ENCODE measurements at regions of chr6 and their contacts with region 1.

Region 1: GRCh38 chr6:158869826-158870648 is 50.9 kb upstream of the EZR start:
- DNase-seq: peak in 1 of 9 donors; percentile 97
- ATAC-seq: peak; percentile 87
- H3K4me3 ChIP-seq: peak overlapping the region; percentile 71
- H3K4me3 Mint-ChIP-seq: peak overlapping the region; percentile 83 to 96 (median 92)
- H3K27ac ChIP-seq: peak overlapping the region; percentile 98
- H3K27ac Mint-ChIP-seq: peak overlapping the region; percentile 98 to 100 (median 100)
- H3K4me1 ChIP-seq: peaks cover 16 to 18% of the 10 kb centered on the region in 2 donors
- H3K4me1 Mint-ChIP-seq: peaks cover 7 to 45% (median 25%) of the 10 kb centered on the region in 7 donors
- H3K27me3 ChIP-seq: no peaks in the 10 kb centered on the region
- H3K27me3 Mint-ChIP-seq: peaks cover 0 to 5% (median 0%) of the 10 kb centered on the region in 5 donors

Region 2: GRCh38 chr6:158686791-158687381 is 183.2 kb before region 1 on chr6:
- CTCF ChIA-PET with region 1: no interaction called
- POLR2A ChIA-PET with region 1: no interaction called
- intact Hi-C with region 1: loop called in 1 of 2 experiments (anchors 1 kb)
- DNase-seq: peak; percentile 29 to 92 (median 87)
- ATAC-seq: peak; percentile 96
- H3K4me3 ChIP-seq: peak overlapping the region; percentile 31
- H3K4me3 Mint-ChIP-seq: peak overlapping the region; percentile 66 to 91 (median 79)
- H3K27ac ChIP-seq: peak overlapping the region; percentile 82
- H3K27ac Mint-ChIP-seq: peak overlapping the region; percentile 88 to 100 (median 98)
- H3K4me1 ChIP-seq: peaks cover 28 to 49% of the 10 kb centered on the region in 2 donors
- H3K4me1 Mint-ChIP-seq: peaks cover 36 to 76% (median 70%) of the 10 kb centered on the region in 7 donors
- H3K27me3 ChIP-seq: no peaks in the 10 kb centered on the region
- H3K27me3 Mint-ChIP-seq: no peaks in the 10 kb centered on the region

Region 3: DNA sequence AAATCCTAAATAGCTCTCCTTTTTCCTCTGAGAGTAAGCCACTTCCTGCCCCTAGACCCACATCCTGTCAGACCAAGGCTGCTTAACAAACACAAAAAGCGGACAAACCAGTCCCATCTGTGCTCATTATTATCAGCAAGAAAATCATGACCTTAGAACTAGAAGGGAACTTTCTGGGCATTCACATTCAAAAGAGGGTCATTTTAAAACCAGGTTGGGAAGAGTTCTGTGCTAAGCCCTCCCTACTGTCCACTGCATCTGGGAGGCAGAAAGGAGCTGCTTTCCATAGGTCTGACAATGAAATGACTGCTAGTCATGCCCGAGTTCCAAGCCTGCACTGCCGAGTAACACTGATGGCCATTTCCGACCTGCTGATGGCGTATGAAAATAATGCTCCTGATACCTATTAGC is 66.3 kb before region 1 on chr6:
- CTCF ChIA-PET with region 1: no interaction called
- POLR2A ChIA-PET with region 1: interaction called, 24 read pairs
- intact Hi-C with region 1: no loop called
- DNase-seq: peak in 7 of 9 donors; percentile 40 to 67 (median 60)
- ATAC-seq: peak; percentile 55
- H3K4me3 ChIP-seq: peak overlapping the region; percentile 37
- H3K4me3 Mint-ChIP-seq: peak overlapping the region; percentile 72 to 94 (median 81)
- H3K27ac ChIP-seq: peak overlapping the region; percentile 77
- H3K27ac Mint-ChIP-seq: peak overlapping the region; percentile 72 to 94 (median 82)
- H3K4me1 ChIP-seq: peaks cover 76 to 92% of the 10 kb centered on the region in 2 donors
- H3K4me1 Mint-ChIP-seq: peaks cover 57 to 98% (median 92%) of the 10 kb centered on the region in 7 donors
- H3K27me3 ChIP-seq: no peaks in the 10 kb centered on the region
- H3K27me3 Mint-ChIP-seq: no peaks in the 10 kb centered on the region

Region 4: DNA sequence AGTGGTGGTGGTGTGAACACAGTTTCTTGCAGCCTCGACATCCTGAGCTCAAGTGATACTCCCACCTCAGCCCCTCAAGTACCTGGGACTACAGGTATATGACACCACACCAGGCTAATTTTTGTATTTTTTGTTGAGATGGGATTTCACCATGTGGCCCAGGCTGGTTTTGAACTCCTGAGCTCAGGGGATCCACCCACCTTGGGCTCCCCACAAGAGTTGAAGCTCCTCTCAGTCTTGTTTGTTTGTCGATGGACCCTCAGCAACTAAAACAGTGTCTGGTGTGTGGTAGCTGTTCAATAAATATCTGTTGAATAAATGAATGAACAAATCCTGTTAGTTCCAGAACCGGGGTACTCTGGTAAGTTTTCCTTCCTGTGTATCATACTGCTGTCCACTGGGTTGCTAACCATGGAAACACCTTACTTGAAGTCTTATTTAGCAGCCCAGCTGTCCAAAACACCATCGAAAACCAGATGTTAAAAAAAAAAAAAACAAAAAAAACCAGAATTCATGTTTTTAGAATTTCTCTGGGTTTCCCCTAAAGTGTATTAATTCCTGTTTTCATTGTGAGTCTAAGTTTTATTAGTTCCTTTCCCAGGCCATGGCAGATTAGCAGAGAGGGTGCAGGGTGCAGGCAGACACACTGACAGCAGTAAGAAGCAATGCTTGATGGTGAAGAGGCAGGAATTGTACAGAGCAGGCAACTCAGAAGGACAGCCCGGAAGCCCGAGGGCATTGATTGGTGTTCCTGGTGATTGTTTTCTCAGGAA is 43.0 kb before region 1 on chr6:
- CTCF ChIA-PET with region 1: no interaction called
- POLR2A ChIA-PET with region 1: interaction called, 10 read pairs
- intact Hi-C with region 1: no loop called
- DNase-seq: no peak
- ATAC-seq: peak; percentile 44
- H3K4me3 ChIP-seq: no peak overlapping the region
- H3K4me3 Mint-ChIP-seq: no peak overlapping the region
- H3K27ac ChIP-seq: no peak overlapping the region
- H3K27ac Mint-ChIP-seq: peak overlapping the region in 1 of 9 donors; percentile 54
- H3K4me1 ChIP-seq: no peaks in the 10 kb centered on the region
- H3K4me1 Mint-ChIP-seq: peaks cover 0 to 9% (median 0%) of the 10 kb centered on the region in 7 donors
- H3K27me3 ChIP-seq: no peaks in the 10 kb centered on the region
- H3K27me3 Mint-ChIP-seq: peaks cover 0 to under 1% (median 0%) of the 10 kb centered on the region in 5 donors

Region 5: GRCh38 chr6:158910484-158911348 is 40.7 kb after region 1 on chr6:
- CTCF ChIA-PET with region 1: no interaction called
- POLR2A ChIA-PET with region 1: interaction called, 18 read pairs
- intact Hi-C with region 1: loop called in 1 of 2 experiments (anchors 2 kb)
- DNase-seq: peak in 4 of 9 donors; percentile 25 to 32 (median 28)
- ATAC-seq: peak; percentile 59
- H3K4me3 ChIP-seq: peak overlapping the region; percentile 24
- H3K4me3 Mint-ChIP-seq: peak overlapping the region; percentile 63 to 83 (median 74)
- H3K27ac ChIP-seq: peak overlapping the region; percentile 52
- H3K27ac Mint-ChIP-seq: peak overlapping the region in 8 of 9 donors; percentile 69 to 91 (median 83)
- H3K4me1 ChIP-seq: peaks cover 23 to 32% of the 10 kb centered on the region in 2 donors
- H3K4me1 Mint-ChIP-seq: peaks cover 26 to 46% (median 37%) of the 10 kb centered on the region in 7 donors
- H3K27me3 ChIP-seq: no peaks in the 10 kb centered on the region
- H3K27me3 Mint-ChIP-seq: peaks cover 0 to 3% (median 0%) of the 10 kb centered on the region in 5 donors

Region 6: DNA sequence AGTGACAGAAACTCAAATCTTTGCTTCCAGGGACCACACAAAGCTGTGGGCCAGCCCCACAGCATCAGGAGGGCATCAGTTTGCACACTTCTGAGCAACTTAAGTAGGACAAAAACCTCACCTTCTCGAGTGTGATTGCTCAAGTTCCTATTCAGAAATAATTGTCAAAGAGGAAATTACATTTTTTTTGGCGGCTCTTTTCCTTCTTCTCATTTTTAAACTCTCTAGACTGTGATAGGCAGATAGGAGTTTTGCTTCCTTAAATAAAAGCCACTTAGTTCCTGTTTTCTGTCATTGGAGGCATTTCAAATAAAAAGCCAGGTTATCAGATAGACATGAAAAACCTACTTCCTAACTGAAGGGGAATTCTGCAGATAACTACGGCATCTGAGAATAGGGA is 186.0 kb after region 1 on chr6:
- CTCF ChIA-PET with region 1: no interaction called
- POLR2A ChIA-PET with region 1: no interaction called
- intact Hi-C with region 1: no loop called
- DNase-seq: no peak
- ATAC-seq: peak; percentile 70
- H3K4me3 ChIP-seq: peak overlapping the region; percentile 14
- H3K4me3 Mint-ChIP-seq: peak overlapping the region; percentile 12 to 77 (median 63)
- H3K27ac ChIP-seq: peak overlapping the region; percentile 55
- H3K27ac Mint-ChIP-seq: peak overlapping the region; percentile 6 to 91 (median 82)
- H3K4me1 ChIP-seq: peaks cover 28 to 48% of the 10 kb centered on the region in 2 donors
- H3K4me1 Mint-ChIP-seq: peaks cover 31 to 72% (median 52%) of the 10 kb centered on the region in 7 donors
- H3K27me3 ChIP-seq: no peaks in the 10 kb centered on the region
- H3K27me3 Mint-ChIP-seq: no peaks in the 10 kb centered on the region

Region 7: GRCh38 chr6:159104163-159104925 is 234.3 kb after region 1 on chr6:
- CTCF ChIA-PET with region 1: no interaction called
- POLR2A ChIA-PET with region 1: no interaction called
- intact Hi-C with region 1: loop called in 1 of 2 experiments (anchors 5 kb)
- DNase-seq: peak; percentile 68 to 81 (median 77)
- ATAC-seq: peak; percentile 79
- H3K4me3 ChIP-seq: peak overlapping the region; percentile 5
- H3K4me3 Mint-ChIP-seq: peak overlapping the region in 9 of 10 donors; percentile 40 to 69 (median 54)
- H3K27ac ChIP-seq: peak overlapping the region; percentile 79
- H3K27ac Mint-ChIP-seq: peak overlapping the region; percentile 82 to 98 (median 91)
- H3K4me1 ChIP-seq: peaks cover 58 to 73% of the 10 kb centered on the region in 2 donors
- H3K4me1 Mint-ChIP-seq: peaks cover 58 to 96% (median 86%) of the 10 kb centered on the region in 7 donors
- H3K27me3 ChIP-seq: no peaks in the 10 kb centered on the region
- H3K27me3 Mint-ChIP-seq: no peaks in the 10 kb centered on the region

Region 8: DNA sequence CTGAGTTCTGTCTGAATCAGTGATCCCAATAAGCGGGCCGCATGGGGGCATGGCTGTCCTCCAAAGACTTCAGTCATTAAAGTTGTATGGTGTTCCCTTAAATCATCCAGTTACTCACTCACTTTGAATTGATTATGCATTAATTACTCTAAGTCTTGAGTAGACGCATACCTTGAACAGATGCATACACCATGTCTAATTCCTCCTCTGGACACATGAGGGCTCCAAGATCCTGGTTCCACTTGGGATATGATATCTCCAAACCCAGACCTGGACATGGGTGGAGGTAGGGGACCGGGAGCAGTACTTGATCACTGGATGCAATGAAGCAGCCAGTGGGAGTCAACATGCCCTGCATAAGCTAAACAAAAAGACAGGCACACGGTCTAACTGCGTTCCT is 503.6 kb after region 1 on chr6:
- CTCF ChIA-PET with region 1: no interaction called
- POLR2A ChIA-PET with region 1: no interaction called
- intact Hi-C with region 1: no loop called
- DNase-seq: no peak
- ATAC-seq: no peak
- H3K4me3 ChIP-seq: no peak overlapping the region
- H3K4me3 Mint-ChIP-seq: no peak overlapping the region
- H3K27ac ChIP-seq: no peak overlapping the region
- H3K27ac Mint-ChIP-seq: no peak overlapping the region
- H3K4me1 ChIP-seq: no peaks in the 10 kb centered on the region
- H3K4me1 Mint-ChIP-seq: no peaks in the 10 kb centered on the region
- H3K27me3 ChIP-seq: no peaks in the 10 kb centered on the region
- H3K27me3 Mint-ChIP-seq: peaks cover 0 to 31% (median 9%) of the 10 kb centered on the region in 5 donors

Measured in naive thymus-derived CD4-positive, alpha-beta T cell (primary cell).